WTC11 (cell line): ENCODE measurements at regions of chr12 and their contacts with region 1.

Region 1: GRCh38 chr12:46661110-46661845 is 164.5 kb downstream of the SLC38A4 start:
- DNase-seq: no peak
- ATAC-seq: peak; percentile 93
- H3K4me3 Mint-ChIP-seq: no peak overlapping the region
- H3K27ac Mint-ChIP-seq: peak overlapping the region; percentile 84
- H3K4me1 Mint-ChIP-seq: peaks cover 53% of the 10 kb centered on the region
- H3K27me3 Mint-ChIP-seq: no peaks in the 10 kb centered on the region
- CTCF ChIP-seq: peak; percentile 27; the same call in 1 of the 2 replicates

Region 2: DNA sequence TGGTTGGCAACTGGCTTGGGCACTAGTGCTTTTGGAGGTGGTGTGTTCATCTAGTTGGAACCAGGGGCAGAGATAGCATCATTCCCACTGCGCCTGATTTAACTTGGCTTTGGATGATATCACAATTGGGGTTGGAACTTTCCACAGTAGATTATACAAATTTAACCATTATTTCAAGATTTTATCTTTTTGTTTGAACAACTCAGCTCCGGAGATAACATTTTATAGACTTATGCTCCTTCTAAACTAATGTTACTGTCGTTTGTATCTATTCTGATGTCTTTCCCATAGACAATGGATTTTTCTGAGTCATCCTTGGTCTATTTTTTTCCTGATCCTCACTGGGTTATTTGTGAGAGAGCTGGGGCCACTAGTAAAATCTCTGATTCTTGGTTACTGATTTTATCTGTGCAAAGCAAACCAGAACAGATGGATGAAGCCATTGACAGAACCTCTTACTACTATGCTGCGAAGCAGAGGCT is 10.6 kb before region 1 on chr12:
- CTCF ChIA-PET with region 1: interaction called, 12 read pairs
- POLR2A ChIA-PET with region 1: no interaction called
- DNase-seq: no peak
- ATAC-seq: no peak
- H3K4me3 Mint-ChIP-seq: no peak overlapping the region
- H3K27ac Mint-ChIP-seq: no peak overlapping the region
- H3K4me1 Mint-ChIP-seq: peaks cover 11% of the 10 kb centered on the region
- H3K27me3 Mint-ChIP-seq: no peaks in the 10 kb centered on the region; the same call in 1 of the 2 replicates
- CTCF ChIP-seq: no peak

Region 3: GRCh38 chr12:46675736-46676135 is 14.5 kb after region 1 on chr12:
- CTCF ChIA-PET with region 1: interaction called, 13 read pairs
- POLR2A ChIA-PET with region 1: no interaction called
- DNase-seq: peak; percentile 31
- ATAC-seq: peak; percentile 23; the same call in 1 of the 2 replicates
- H3K4me3 Mint-ChIP-seq: no peak overlapping the region
- H3K27ac Mint-ChIP-seq: no peak overlapping the region
- H3K4me1 Mint-ChIP-seq: peaks cover 62% of the 10 kb centered on the region
- H3K27me3 Mint-ChIP-seq: no peaks in the 10 kb centered on the region
- CTCF ChIP-seq: no peak; the same call in none of the 2 replicates